ENCODE measurements at regions of chr5 and their contacts with region 1.

Region 1: GRCh38 chr5:60699530-60700382 is at the start of gene DEPDC1B:
- DNase-seq: peak; percentile 90
- H3K4me3 Mint-ChIP-seq: peak within 1 kb of the TSS; percentile 90
- H3K27ac Mint-ChIP-seq: peak within 1 kb of the TSS; percentile 92
- H3K4me1 Mint-ChIP-seq: peaks cover 7% of the 10 kb centered on the region
- H3K27me3 Mint-ChIP-seq: no peaks in the 10 kb centered on the region
- CTCF ChIP-seq: peak; percentile 26
- total RNA-seq, gene DEPDC1B: 6.0 and 11.3 TPM in 2 replicates

Region 2: GRCh38 chr5:60568646-60569045 is 131.1 kb before region 1 on chr5:
- CTCF ChIA-PET with region 1: no interaction called
- POLR2A ChIA-PET with region 1: no interaction called
- intact Hi-C with region 1: no loop called
- DNase-seq: no peak
- H3K4me3 Mint-ChIP-seq: no peak overlapping the region
- H3K27ac Mint-ChIP-seq: no peak overlapping the region
- H3K4me1 Mint-ChIP-seq: no peaks in the 10 kb centered on the region
- H3K27me3 Mint-ChIP-seq: no peaks in the 10 kb centered on the region
- CTCF ChIP-seq: no peak

Region 3: DNA sequence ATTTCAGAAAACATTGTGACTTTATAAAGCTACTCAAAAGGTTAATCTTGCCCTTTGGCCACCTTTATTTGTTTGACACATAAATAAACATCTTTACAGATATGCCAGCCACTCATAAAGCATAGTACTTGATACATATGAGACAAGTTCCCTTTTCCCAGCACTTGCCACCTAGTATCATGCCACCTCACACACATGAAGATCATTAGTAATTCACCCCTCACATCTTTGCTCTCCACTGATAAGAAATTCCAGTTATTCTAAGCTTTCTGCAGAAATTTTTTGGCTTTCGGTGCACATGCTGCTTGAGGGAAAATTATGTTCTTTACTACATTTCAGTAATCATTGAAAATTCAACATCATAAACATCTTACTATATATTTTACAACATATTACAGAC is 58.9 kb before region 1 on chr5:
- CTCF ChIA-PET with region 1: no interaction called
- POLR2A ChIA-PET with region 1: no interaction called
- intact Hi-C with region 1: no loop called
- DNase-seq: no peak
- H3K4me3 Mint-ChIP-seq: no peak overlapping the region
- H3K27ac Mint-ChIP-seq: no peak overlapping the region
- H3K4me1 Mint-ChIP-seq: no peaks in the 10 kb centered on the region
- H3K27me3 Mint-ChIP-seq: no peaks in the 10 kb centered on the region
- CTCF ChIP-seq: no peak

Region 4: GRCh38 chr5:60687927-60688720 is 11.6 kb before region 1 on chr5:
- CTCF ChIA-PET with region 1: interaction called, 26 read pairs
- POLR2A ChIA-PET with region 1: interaction called, 69 read pairs
- intact Hi-C with region 1: no loop called
- DNase-seq: peak; percentile 53
- H3K4me3 Mint-ChIP-seq: no peak overlapping the region
- H3K27ac Mint-ChIP-seq: no peak overlapping the region
- H3K4me1 Mint-ChIP-seq: peaks cover 12% of the 10 kb centered on the region
- H3K27me3 Mint-ChIP-seq: no peaks in the 10 kb centered on the region
- CTCF ChIP-seq: peak; percentile 22

Region 5: DNA sequence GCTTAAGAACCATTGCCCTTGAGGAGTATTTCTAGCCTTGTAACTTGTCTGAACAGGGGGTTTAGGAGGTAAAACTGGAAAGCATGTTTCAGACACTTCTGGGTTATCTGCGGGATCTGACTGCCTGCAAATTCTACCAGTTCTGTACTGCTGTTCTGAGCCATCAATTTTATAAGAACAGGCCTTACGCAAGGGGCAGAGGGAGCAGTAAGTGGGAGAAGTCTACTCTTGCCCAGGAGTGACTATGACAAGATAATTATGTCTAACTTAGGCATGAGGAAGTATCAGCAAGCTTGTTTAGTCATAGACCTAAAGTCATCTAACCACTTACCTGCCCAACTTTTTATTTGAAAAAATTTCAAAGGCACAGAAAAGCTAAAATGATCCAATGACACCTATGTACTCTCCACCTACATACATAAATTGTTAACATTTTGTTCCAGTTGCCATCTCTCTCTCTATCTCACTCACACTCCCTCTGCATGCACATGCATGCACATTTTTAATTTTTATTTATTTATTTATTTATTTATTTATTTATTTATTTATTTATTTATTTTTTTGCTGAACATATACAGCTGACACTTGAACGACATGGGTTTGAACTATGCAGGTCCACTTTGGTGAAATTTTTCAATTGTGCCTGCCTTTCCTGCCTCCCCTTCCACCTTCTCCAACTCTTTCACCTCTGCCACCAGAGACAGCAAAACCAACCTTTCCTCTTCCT is 18.6 kb after region 1 on chr5:
- CTCF ChIA-PET with region 1: interaction called, 5 read pairs
- POLR2A ChIA-PET with region 1: interaction called, 20 read pairs
- intact Hi-C with region 1: no loop called
- DNase-seq: peak; percentile 9
- H3K4me3 Mint-ChIP-seq: no peak overlapping the region
- H3K27ac Mint-ChIP-seq: no peak overlapping the region
- H3K4me1 Mint-ChIP-seq: no peaks in the 10 kb centered on the region
- H3K27me3 Mint-ChIP-seq: no peaks in the 10 kb centered on the region
- CTCF ChIP-seq: no peak

Region 6: GRCh38 chr5:60843936-60844905 is 144.5 kb after region 1 on chr5 and contains the start of gene ELOVL7:
- CTCF ChIA-PET with region 1: interaction called, 12 read pairs
- POLR2A ChIA-PET with region 1: interaction called, 31 read pairs
- intact Hi-C with region 1: loop called (anchors 5 kb)
- DNase-seq: peak; percentile 76
- H3K4me3 Mint-ChIP-seq: peak within 1 kb of the TSS; percentile 88
- H3K27ac Mint-ChIP-seq: peak within 1 kb of the TSS; percentile 75
- H3K4me1 Mint-ChIP-seq: peaks cover 18% of the 10 kb centered on the region
- H3K27me3 Mint-ChIP-seq: no peaks in the 10 kb centered on the region
- CTCF ChIP-seq: no peak
- total RNA-seq, gene ELOVL7: 10.3 and 14.3 TPM in 2 replicates

Region 7: GRCh38 chr5:60944904-60945812 is 245.4 kb after region 1 on chr5 and contains the starts of genes ERCC8 and NDUFAF2:
- CTCF ChIA-PET with region 1: interaction called, 4 read pairs
- POLR2A ChIA-PET with region 1: interaction called, 26 read pairs
- intact Hi-C with region 1: loop called (anchors 5 kb)
- DNase-seq: peak; percentile 95
- H3K4me3 Mint-ChIP-seq: no peak within 1 kb of the TSS
- H3K27ac Mint-ChIP-seq: no peak within 1 kb of the TSS
- H3K4me1 Mint-ChIP-seq: no peaks in the 10 kb centered on the region
- H3K27me3 Mint-ChIP-seq: no peaks in the 10 kb centered on the region
- CTCF ChIP-seq: no peak
- total RNA-seq, gene ERCC8: 13.7 and 17.2 TPM in 2 replicates
- total RNA-seq, gene NDUFAF2: 120 and 141 TPM in 2 replicates

Region 8: DNA sequence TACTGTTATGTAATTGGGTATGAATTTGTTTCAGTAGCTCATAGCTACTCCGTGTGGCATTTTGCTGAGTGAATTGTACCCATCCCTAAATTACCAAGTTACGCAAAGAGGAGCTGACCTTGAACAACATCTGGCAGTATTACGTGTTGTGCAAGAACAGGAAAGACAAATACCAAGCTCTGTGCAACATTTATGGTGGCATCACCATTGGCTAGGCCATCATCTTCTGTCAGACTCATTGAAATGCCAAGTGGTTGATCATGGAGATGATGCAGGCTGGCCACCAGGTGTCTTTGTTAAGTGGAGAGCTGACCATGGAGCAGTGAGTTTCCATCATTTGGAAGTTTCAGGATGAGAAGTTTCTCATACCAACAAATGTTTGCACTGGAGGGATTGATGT is 647.3 kb after region 1 on chr5:
- CTCF ChIA-PET with region 1: no interaction called
- POLR2A ChIA-PET with region 1: no interaction called
- intact Hi-C with region 1: no loop called
- DNase-seq: peak; percentile 58
- H3K4me3 Mint-ChIP-seq: no peak overlapping the region
- H3K27ac Mint-ChIP-seq: no peak overlapping the region
- H3K4me1 Mint-ChIP-seq: peaks cover 24% of the 10 kb centered on the region
- H3K27me3 Mint-ChIP-seq: no peaks in the 10 kb centered on the region
- CTCF ChIP-seq: no peak